Dorsolateral prefrontal cortex (tissue), 120 donors: ENCODE measurements at regions of chr7 and their contacts with region 1.

Region 1: GRCh38 chr7:116138202-116138801 is 72.0 kb upstream of the TES start:
- DNase-seq: no peak
- H3K4me3 ChIP-seq: peak overlapping the region in 4 of 59 donors; percentile 24 to 37 (median 28)
- H3K27ac ChIP-seq: peak overlapping the region in 36 of 59 donors; percentile 17 to 92 (median 75)
- H3K27me3 ChIP-seq: peaks cover 0 to 5% (median 0%) of the 10 kb centered on the region in 45 donors
- CTCF ChIP-seq: peak; percentile 54 to 91 (median 78)

Region 2: DNA sequence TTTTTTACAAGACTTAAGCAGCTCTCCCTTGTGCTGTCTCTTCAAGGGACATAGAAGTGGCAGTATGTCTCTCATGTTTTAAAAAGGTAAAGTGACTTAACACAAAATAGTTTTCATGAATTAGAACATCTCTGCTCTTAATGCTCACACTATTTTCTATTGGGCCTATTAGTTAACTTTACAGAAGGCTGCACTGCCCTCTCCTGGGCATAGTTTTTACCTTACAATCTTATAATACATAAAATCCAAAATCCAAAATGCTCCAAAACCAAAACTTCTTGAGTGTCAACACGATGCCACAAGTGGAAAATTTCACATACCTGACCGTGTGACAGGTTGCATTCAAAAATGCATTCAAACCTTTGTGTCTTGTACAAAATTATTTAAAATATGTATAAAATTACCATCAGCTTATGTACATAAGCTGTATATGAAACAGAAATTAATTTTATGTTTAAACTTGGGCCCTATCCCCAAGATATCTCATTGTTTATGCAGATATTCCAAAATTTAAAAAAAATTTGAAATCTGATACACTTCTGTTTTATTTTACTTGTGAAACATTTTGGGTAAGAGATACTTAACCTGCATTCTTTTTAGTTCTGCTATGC is 97.8 kb after region 1 on chr7:
- intact Hi-C with region 1: loop called (anchors 2 to 5 kb)
- DNase-seq: peak in 3 of 10 donors; percentile 15 to 66 (median 39)
- H3K4me3 ChIP-seq: no peak overlapping the region
- H3K27ac ChIP-seq: no peak overlapping the region
- H3K27me3 ChIP-seq: no peaks in the 10 kb centered on the region
- CTCF ChIP-seq: peak; percentile 40 to 90 (median 68)